ENCODE measurements at regions of chr2 and their contacts with region 1.

Region 1: DNA sequence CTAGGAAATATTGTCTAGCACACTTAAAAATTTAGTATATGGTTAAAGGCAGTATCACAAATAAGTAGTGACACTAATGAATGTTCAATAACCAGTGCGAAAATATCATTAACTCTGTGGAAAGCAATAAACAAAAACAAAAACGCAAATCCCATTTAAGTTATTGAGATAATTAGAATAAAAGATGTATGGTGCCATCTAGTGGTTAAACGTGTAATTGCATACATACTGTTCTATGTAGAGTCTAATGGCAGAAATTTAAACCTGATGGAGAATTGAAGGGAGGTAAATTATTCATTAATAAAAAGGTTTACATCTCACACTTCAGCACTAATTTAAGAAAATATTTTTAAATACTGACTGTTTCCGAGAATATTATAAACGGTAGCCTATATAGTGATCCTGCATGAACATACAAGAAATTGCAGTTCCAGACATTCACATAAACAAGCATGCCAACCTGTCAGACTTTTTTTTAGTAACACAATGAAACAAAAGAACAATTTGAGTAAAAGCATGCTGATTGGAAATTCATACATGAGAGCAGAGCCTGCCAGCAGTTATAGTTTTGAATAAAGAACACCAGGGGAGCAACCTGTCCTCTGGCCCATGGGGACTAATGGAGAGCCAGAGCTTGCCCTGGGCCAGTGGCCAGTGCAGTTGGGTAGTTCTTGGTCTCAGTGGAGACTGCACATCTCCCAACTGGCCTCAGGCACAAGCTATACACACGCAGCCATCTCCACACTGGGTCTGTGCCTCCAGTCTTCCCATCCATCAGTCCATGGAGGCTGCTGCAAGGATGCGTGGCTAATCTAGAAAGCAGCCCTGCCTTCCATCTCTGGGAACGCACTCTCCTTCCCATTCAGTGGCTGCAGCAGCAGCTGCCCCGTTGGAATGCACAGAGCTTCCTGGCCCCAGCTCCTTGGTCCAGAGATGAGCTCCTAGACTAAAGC is 28.0 kb downstream of the GCG start:
- DNase-seq: no peak
- H3K4me3 Mint-ChIP-seq: no peak overlapping the region
- H3K27ac Mint-ChIP-seq: no peak overlapping the region
- H3K4me1 Mint-ChIP-seq: peaks cover 8% of the 10 kb centered on the region
- H3K27me3 Mint-ChIP-seq: no peaks in the 10 kb centered on the region

Region 2: GRCh38 chr2:161426922-161427663 is 697.0 kb before region 1 on chr2:
- CTCF ChIA-PET with region 1: no interaction called
- POLR2A ChIA-PET with region 1: no interaction called
- intact Hi-C with region 1: loop called (anchors 10 kb)
- DNase-seq: no peak
- H3K4me3 Mint-ChIP-seq: peak overlapping the region; percentile 48
- H3K27ac Mint-ChIP-seq: no peak overlapping the region
- H3K4me1 Mint-ChIP-seq: peaks cover 28% of the 10 kb centered on the region
- H3K27me3 Mint-ChIP-seq: peaks cover 62% of the 10 kb centered on the region

Region 3: GRCh38 chr2:161586517-161587167 is 537.4 kb before region 1 on chr2:
- CTCF ChIA-PET with region 1: interaction called, 43 read pairs
- POLR2A ChIA-PET with region 1: no interaction called
- intact Hi-C with region 1: loop called (anchors 1 kb)
- DNase-seq: no peak
- H3K4me3 Mint-ChIP-seq: no peak overlapping the region
- H3K27ac Mint-ChIP-seq: no peak overlapping the region
- H3K4me1 Mint-ChIP-seq: no peaks in the 10 kb centered on the region
- H3K27me3 Mint-ChIP-seq: no peaks in the 10 kb centered on the region

Region 4: DNA sequence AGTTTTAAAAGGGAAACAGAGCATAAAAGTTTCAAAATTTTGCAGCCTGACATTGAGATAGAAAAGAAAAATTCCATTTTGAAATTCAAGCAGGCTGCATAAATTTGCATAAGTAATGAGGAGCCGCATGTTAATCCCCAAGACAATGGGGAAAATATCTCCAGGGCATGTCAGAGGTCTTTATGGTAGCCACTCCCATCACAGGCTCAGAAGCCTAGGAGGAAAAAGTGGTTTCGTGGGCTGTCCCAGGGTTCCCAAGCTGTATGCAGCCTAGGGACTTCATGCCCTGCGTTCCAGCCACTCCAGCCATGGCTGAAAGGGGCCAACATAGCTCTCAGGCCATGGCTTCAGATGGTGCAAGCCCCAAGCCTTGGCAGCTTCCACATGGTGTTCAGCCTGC is 391.1 kb before region 1 on chr2:
- CTCF ChIA-PET with region 1: no interaction called
- POLR2A ChIA-PET with region 1: no interaction called
- intact Hi-C with region 1: no loop called
- DNase-seq: no peak
- H3K4me3 Mint-ChIP-seq: no peak overlapping the region
- H3K27ac Mint-ChIP-seq: no peak overlapping the region
- H3K4me1 Mint-ChIP-seq: no peaks in the 10 kb centered on the region
- H3K27me3 Mint-ChIP-seq: no peaks in the 10 kb centered on the region

Region 5: GRCh38 chr2:161814008-161814660 is 309.9 kb before region 1 on chr2:
- CTCF ChIA-PET with region 1: no interaction called
- POLR2A ChIA-PET with region 1: no interaction called
- intact Hi-C with region 1: no loop called
- DNase-seq: no peak
- H3K4me3 Mint-ChIP-seq: no peak overlapping the region
- H3K27ac Mint-ChIP-seq: no peak overlapping the region
- H3K4me1 Mint-ChIP-seq: no peaks in the 10 kb centered on the region
- H3K27me3 Mint-ChIP-seq: no peaks in the 10 kb centered on the region

Region 6: GRCh38 chr2:161946489-161947107 is 177.5 kb before region 1 on chr2:
- CTCF ChIA-PET with region 1: interaction called, 15 read pairs
- POLR2A ChIA-PET with region 1: no interaction called
- intact Hi-C with region 1: loop called (anchors 1 kb)
- DNase-seq: no peak
- H3K4me3 Mint-ChIP-seq: no peak overlapping the region
- H3K27ac Mint-ChIP-seq: no peak overlapping the region
- H3K4me1 Mint-ChIP-seq: peaks cover 6% of the 10 kb centered on the region
- H3K27me3 Mint-ChIP-seq: no peaks in the 10 kb centered on the region

Region 7: GRCh38 chr2:161992526-161992925 is 131.6 kb before region 1 on chr2:
- CTCF ChIA-PET with region 1: interaction called, 8 read pairs
- POLR2A ChIA-PET with region 1: no interaction called
- intact Hi-C with region 1: loop called (anchors 5 kb)
- DNase-seq: peak; percentile 77
- H3K4me3 Mint-ChIP-seq: peak overlapping the region; percentile 73
- H3K27ac Mint-ChIP-seq: peak overlapping the region; percentile 92
- H3K4me1 Mint-ChIP-seq: peaks cover 61% of the 10 kb centered on the region
- H3K27me3 Mint-ChIP-seq: no peaks in the 10 kb centered on the region

Region 8: GRCh38 chr2:162007447-162008040 is 116.5 kb before region 1 on chr2:
- CTCF ChIA-PET with region 1: interaction called, 14 read pairs
- POLR2A ChIA-PET with region 1: no interaction called
- intact Hi-C with region 1: loop called (anchors 1 kb)
- DNase-seq: no peak
- H3K4me3 Mint-ChIP-seq: no peak overlapping the region
- H3K27ac Mint-ChIP-seq: no peak overlapping the region
- H3K4me1 Mint-ChIP-seq: peaks cover 37% of the 10 kb centered on the region
- H3K27me3 Mint-ChIP-seq: no peaks in the 10 kb centered on the region

Region 9: DNA sequence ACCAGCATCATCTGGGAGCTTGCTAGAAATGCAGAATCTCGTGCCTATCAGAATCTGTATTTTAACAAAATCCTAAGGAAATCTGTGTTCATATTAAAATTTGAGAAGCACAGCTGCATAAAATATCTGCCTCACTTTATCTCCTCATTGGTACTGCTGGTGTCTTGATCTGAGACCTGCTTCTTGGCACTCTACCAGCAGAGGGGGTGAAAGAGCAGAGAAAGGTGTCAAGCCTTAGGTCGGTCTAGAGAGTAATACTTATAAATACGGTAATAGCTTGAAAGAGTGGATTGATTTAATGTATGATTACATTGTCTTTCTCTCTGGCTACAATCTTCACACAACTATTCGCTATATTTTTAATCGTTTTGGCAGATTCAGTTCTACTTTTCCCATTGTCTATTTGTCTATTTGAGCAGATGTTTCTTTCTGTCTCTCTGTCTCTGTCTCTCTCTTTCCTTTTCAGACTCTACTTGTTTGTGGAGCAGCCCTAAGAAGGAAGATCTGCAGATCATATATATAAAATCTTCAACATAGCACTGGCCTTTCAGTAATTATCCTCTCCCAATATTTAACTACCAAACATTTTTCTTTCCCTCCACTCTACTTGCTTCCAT is 29.6 kb after region 1 on chr2:
- CTCF ChIA-PET with region 1: interaction called, 14 read pairs
- POLR2A ChIA-PET with region 1: no interaction called
- intact Hi-C with region 1: no loop called
- DNase-seq: peak; percentile 70
- H3K4me3 Mint-ChIP-seq: no peak overlapping the region
- H3K27ac Mint-ChIP-seq: no peak overlapping the region
- H3K4me1 Mint-ChIP-seq: peaks cover 4% of the 10 kb centered on the region
- H3K27me3 Mint-ChIP-seq: peaks cover 17% of the 10 kb centered on the region

Region 10: GRCh38 chr2:162196638-162197037 is 72.6 kb after region 1 on chr2:
- CTCF ChIA-PET with region 1: no interaction called
- POLR2A ChIA-PET with region 1: no interaction called
- intact Hi-C with region 1: no loop called
- DNase-seq: no peak
- H3K4me3 Mint-ChIP-seq: no peak overlapping the region
- H3K27ac Mint-ChIP-seq: no peak overlapping the region
- H3K4me1 Mint-ChIP-seq: peaks cover 10% of the 10 kb centered on the region
- H3K27me3 Mint-ChIP-seq: peaks cover 29% of the 10 kb centered on the region

Measured in activated CD4-positive, alpha-beta memory T cell treated with anti-CD3 and anti-CD28 coated beads for 36 hours (primary cell).